B cell (primary cell): ENCODE measurements at regions of chr14 and their contacts with region 1.

Region 1: DNA sequence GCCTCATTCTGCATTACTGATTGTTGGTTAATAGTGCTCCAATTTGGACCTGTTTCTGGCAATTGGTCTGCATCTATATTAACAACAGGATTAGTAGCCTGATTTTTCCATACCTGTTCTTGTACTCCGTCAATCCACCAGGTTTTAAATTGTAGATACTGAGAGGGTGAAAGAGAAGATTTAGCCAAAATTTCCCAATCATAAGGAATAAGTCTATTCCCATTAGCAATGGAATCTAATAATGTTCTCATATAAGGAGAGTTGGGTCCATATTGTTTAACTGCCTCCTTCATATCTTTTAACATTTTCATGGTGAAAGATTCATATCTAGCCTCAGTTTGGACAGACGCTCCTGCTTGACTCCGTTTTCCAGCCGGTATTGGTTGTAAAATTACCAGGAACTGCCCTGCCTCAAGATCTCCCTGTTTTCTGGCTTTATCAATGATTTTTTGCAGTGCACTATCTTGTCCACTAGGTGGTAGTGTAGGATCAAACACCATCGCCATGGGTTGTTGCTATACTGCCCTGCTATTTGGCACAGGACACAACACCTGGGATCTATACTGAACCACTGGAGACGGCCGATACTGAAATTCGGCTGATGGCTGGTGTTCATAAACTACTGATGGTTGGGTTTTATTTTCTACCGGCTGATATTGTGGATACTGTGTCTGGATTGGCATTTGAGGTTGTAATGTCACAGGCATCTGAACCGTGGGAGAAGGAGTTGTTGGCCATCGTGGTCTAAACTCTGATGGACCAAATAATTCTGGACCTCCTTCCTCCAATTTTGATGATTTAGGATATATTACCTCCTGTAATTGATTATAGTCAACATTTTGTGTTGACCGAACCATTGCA is 25.2 kb downstream of the DHRS4L2 start:
- DNase-seq: peak; percentile 83
- ATAC-seq: peak; percentile 92
- H3K4me3 ChIP-seq: no peak overlapping the region
- H3K4me3 Mint-ChIP-seq: no peak overlapping the region
- H3K27ac ChIP-seq: no peak overlapping the region
- H3K27ac Mint-ChIP-seq: no peak overlapping the region
- H3K4me1 ChIP-seq: peaks cover 0 to 3% of the 10 kb centered on the region in 2 donors
- H3K4me1 Mint-ChIP-seq: peaks cover 30% of the 10 kb centered on the region
- H3K27me3 ChIP-seq: no peaks in the 10 kb centered on the region
- H3K27me3 Mint-ChIP-seq: no peaks in the 10 kb centered on the region
- CTCF ChIP-seq: peak; percentile 97

Region 2: GRCh38 chr14:23953464-23954278 is 60.2 kb before region 1 on chr14 and contains the start of gene DHRS4:
- CTCF ChIA-PET with region 1: interaction called, 3 read pairs
- POLR2A ChIA-PET with region 1: no interaction called
- intact Hi-C with region 1: loop called (anchors 10 kb)
- DNase-seq: peak; percentile 83
- ATAC-seq: peak; percentile 94
- H3K4me3 ChIP-seq: peak within 1 kb of the TSS; percentile 32 to 97 (median 70)
- H3K4me3 Mint-ChIP-seq: peak within 1 kb of the TSS; percentile 97
- H3K27ac ChIP-seq: peak within 1 kb of the TSS; percentile 40 to 63
- H3K27ac Mint-ChIP-seq: peak within 1 kb of the TSS; percentile 90
- H3K4me1 ChIP-seq: peaks cover 7 to 16% of the 10 kb centered on the region in 2 donors
- H3K4me1 Mint-ChIP-seq: peaks cover 25% of the 10 kb centered on the region
- H3K27me3 ChIP-seq: no peaks in the 10 kb centered on the region
- H3K27me3 Mint-ChIP-seq: no peaks in the 10 kb centered on the region
- CTCF ChIP-seq: peak; percentile 88
- total RNA-seq, gene DHRS4: 15.3 and 15.6 TPM in 2 replicates

Region 3: DNA sequence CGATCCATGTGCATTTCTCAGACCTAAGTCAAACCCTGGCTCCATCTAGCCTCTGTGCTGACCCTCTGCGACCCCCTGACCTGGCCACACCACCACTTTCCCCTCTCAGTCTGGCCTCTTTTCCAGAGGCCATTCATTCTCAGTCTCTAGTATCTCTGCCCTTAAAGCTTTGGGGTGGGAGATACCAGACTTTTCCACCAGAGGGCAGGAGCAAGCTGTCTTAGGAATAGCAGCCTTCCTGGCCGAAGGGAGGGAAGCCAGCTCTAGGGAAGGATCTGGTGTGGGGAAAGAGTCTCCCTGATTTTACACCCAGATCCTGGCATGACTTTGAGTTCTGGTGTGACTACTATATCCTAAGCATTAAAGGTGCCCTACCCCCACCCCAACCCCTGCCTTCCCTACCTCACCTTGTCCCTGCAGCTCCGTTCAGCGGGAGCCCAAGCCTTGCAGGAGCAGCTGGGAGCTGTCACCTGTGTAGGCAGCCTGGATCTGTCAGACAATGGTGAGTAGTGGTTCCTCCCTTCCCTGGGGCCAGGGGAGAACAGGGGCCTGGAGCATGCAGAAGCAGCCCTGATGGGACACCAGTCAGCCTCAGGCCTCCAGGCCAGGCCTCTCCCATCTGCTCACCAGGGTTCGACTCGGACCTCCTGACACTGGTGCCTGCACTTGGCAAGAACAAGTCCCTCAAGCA is 44.5 kb after region 1 on chr14:
- CTCF ChIA-PET with region 1: no interaction called
- POLR2A ChIA-PET with region 1: no interaction called
- intact Hi-C with region 1: loop called (anchors 1 kb)
- DNase-seq: no peak
- ATAC-seq: peak; percentile 68
- H3K4me3 ChIP-seq: no peak overlapping the region
- H3K4me3 Mint-ChIP-seq: no peak overlapping the region
- H3K27ac ChIP-seq: no peak overlapping the region
- H3K27ac Mint-ChIP-seq: no peak overlapping the region
- H3K4me1 ChIP-seq: no peaks in the 10 kb centered on the region
- H3K4me1 Mint-ChIP-seq: peaks cover 1% of the 10 kb centered on the region
- H3K27me3 ChIP-seq: peaks cover 0 to 26% (median 5%) of the 10 kb centered on the region in 4 experiments
- H3K27me3 Mint-ChIP-seq: no peaks in the 10 kb centered on the region
- CTCF ChIP-seq: peak; percentile 75

Region 4: GRCh38 chr14:24093901-24094761 is 80.2 kb after region 1 on chr14 and contains the start of gene PCK2:
- CTCF ChIA-PET with region 1: interaction called, 13 read pairs
- POLR2A ChIA-PET with region 1: no interaction called
- intact Hi-C with region 1: loop called (anchors 1 kb)
- DNase-seq: peak; percentile 81
- ATAC-seq: peak; percentile 66
- H3K4me3 ChIP-seq: peak within 1 kb of the TSS; percentile 62 to 97 (median 89)
- H3K4me3 Mint-ChIP-seq: peak within 1 kb of the TSS; percentile 95
- H3K27ac ChIP-seq: peak within 1 kb of the TSS; percentile 80 to 95
- H3K27ac Mint-ChIP-seq: peak within 1 kb of the TSS; percentile 92
- H3K4me1 ChIP-seq: peaks cover 5 to 35% of the 10 kb centered on the region in 2 donors
- H3K4me1 Mint-ChIP-seq: peaks cover 38% of the 10 kb centered on the region
- H3K27me3 ChIP-seq: no peaks in the 10 kb centered on the region
- H3K27me3 Mint-ChIP-seq: no peaks in the 10 kb centered on the region
- CTCF ChIP-seq: peak; percentile 28
- total RNA-seq, gene PCK2: 34.1 and 40.4 TPM in 2 replicates

Region 5: DNA sequence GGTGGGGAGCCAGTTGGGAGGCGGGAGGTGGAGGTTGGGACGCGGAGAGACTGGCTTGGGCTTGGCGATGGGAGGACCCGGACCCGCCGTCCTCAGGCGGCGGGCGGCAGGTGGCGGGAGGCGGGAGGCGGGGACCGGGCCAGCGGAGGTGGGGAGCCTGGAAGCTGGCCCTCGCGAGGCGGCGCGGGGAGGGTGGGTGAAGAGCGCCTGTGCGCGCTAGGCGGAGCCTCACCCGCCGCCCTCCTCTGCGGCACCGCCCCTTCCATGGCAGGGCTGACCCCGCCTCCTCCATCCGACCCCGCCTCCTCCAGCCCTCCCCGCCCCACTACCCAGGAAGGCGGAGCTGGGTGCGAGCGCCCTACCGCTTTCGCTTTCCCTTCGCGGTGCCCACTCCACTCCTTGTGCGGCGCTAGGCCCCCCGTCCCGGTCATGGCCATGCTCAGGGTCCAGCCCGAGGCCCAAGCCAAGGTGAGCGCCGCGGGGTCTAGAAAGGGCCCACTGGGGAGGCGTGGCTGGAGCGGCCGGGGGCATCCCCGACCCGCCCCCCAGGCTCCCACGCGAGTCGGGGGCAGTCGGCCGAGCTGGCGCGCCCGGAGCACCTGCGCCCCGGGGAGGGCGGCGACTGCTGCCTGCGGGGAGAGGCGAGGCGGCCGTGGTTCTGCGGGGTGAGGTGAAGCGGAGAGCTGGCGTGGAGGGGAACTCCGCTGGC is 122.1 kb after region 1 on chr14 and contains the start of gene PSME1:
- CTCF ChIA-PET with region 1: no interaction called
- POLR2A ChIA-PET with region 1: no interaction called
- intact Hi-C with region 1: no loop called
- DNase-seq: peak; percentile 96
- ATAC-seq: peak; percentile 97
- H3K4me3 ChIP-seq: peak within 1 kb of the TSS; percentile 54 to 96 (median 78)
- H3K4me3 Mint-ChIP-seq: peak within 1 kb of the TSS; percentile 92
- H3K27ac ChIP-seq: peak within 1 kb of the TSS; percentile 87 to 97
- H3K27ac Mint-ChIP-seq: peak within 1 kb of the TSS; percentile 94
- H3K4me1 ChIP-seq: peaks cover 33 to 43% of the 10 kb centered on the region in 2 donors
- H3K4me1 Mint-ChIP-seq: peaks cover 57% of the 10 kb centered on the region
- H3K27me3 ChIP-seq: no peaks in the 10 kb centered on the region
- H3K27me3 Mint-ChIP-seq: no peaks in the 10 kb centered on the region
- CTCF ChIP-seq: no peak
- total RNA-seq, gene PSME1: 227 and 237 TPM in 2 replicates

Region 6: DNA sequence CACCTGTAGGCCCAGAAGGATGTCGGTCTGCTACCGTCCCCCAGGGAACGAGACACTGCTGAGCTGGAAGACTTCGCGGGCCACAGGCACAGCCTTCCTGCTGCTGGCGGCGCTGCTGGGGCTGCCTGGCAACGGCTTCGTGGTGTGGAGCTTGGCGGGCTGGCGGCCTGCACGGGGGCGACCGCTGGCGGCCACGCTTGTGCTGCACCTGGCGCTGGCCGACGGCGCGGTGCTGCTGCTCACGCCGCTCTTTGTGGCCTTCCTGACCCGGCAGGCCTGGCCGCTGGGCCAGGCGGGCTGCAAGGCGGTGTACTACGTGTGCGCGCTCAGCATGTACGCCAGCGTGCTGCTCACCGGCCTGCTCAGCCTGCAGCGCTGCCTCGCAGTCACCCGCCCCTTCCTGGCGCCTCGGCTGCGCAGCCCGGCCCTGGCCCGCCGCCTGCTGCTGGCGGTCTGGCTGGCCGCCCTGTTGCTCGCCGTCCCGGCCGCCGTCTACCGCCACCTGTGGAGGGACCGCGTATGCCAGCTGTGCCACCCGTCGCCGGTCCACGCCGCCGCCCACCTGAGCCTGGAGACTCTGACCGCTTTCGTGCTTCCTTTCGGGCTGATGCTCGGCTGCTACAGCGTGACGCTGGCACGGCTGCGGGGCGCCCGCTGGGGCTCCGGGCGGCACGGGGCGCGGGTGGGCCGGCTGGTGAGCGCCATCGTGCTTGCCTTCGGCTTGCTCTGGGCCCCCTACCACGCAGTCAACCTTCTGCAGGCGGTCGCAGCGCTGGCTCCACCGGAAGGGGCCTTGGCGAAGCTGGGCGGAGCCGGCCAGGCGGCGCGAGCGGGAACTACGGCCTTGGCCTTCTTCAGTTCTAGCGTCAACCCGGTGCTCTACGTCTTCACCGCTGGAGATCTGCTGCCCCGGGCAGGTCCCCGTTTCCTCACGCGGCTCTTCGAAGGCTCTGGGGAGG is 297.0 kb after region 1 on chr14 and contains the start of gene LTB4R:
- CTCF ChIA-PET with region 1: interaction called, 3 read pairs
- POLR2A ChIA-PET with region 1: no interaction called
- intact Hi-C with region 1: loop called (anchors 5 kb)
- DNase-seq: peak; percentile 90
- ATAC-seq: peak; percentile 76
- H3K4me3 ChIP-seq: peak within 1 kb of the TSS; percentile 8 to 71 (median 57)
- H3K4me3 Mint-ChIP-seq: peak within 1 kb of the TSS; percentile 84
- H3K27ac ChIP-seq: peak within 1 kb of the TSS; percentile 65 to 83
- H3K27ac Mint-ChIP-seq: peak within 1 kb of the TSS; percentile 91
- H3K4me1 ChIP-seq: peaks cover 38 to 57% of the 10 kb centered on the region in 2 donors
- H3K4me1 Mint-ChIP-seq: peaks cover 61% of the 10 kb centered on the region
- H3K27me3 ChIP-seq: no peaks in the 10 kb centered on the region
- H3K27me3 Mint-ChIP-seq: no peaks in the 10 kb centered on the region
- CTCF ChIP-seq: peak; percentile 67
- total RNA-seq, gene LTB4R: 8.8 and 9.2 TPM in 2 replicates

Region 7: DNA sequence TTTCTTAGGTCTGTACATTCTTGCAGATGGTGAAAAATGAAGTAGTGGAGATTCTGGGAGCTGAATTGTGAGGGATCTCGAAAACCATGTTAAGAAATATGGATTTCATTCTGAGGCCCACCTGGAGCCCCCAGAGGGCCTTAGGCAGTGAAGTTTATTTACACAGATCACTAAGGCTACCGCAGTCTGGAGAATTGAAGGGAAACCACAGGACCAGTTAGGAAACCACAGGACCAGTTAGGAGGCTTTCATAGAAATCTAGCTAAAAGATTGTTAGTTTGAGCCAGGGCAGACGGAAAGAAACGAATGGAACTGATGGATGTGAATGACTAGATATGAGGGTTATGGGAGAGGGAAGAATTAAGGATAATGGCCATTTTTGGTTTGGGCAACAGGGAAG is 408.4 kb after region 1 on chr14:
- CTCF ChIA-PET with region 1: no interaction called
- POLR2A ChIA-PET with region 1: no interaction called
- intact Hi-C with region 1: no loop called
- DNase-seq: no peak
- ATAC-seq: no peak
- H3K4me3 ChIP-seq: no peak overlapping the region
- H3K4me3 Mint-ChIP-seq: no peak overlapping the region
- H3K27ac ChIP-seq: no peak overlapping the region
- H3K27ac Mint-ChIP-seq: no peak overlapping the region
- H3K4me1 ChIP-seq: peaks cover 7 to 12% of the 10 kb centered on the region in 2 donors
- H3K4me1 Mint-ChIP-seq: peaks cover 2% of the 10 kb centered on the region
- H3K27me3 ChIP-seq: peaks cover 0 to 28% (median 7%) of the 10 kb centered on the region in 4 experiments
- H3K27me3 Mint-ChIP-seq: peaks cover 21% of the 10 kb centered on the region
- CTCF ChIP-seq: no peak